Pancreas (tissue), 10 donors: ENCODE measurements at regions of chr20 and their contacts with region 1.

Region 1: GRCh38 chr20:17904027-17904426 is 64.6 kb downstream of the SNX5 start:
- DNase-seq: no peak
- ATAC-seq: no peak
- H3K4me3 ChIP-seq: no peak overlapping the region
- H3K27ac ChIP-seq: no peak overlapping the region
- H3K4me1 ChIP-seq: no peaks in the 10 kb centered on the region
- H3K27me3 ChIP-seq: no peaks in the 10 kb centered on the region
- CTCF ChIP-seq: no peak

Region 2: GRCh38 chr20:17654649-17655285 is 249.3 kb before region 1 on chr20:
- intact Hi-C with region 1: loop called in 1 of 3 experiments (anchors 10 kb)
- DNase-seq: peak in 2 of 6 donors; percentile 2 to 44
- ATAC-seq: no peak
- H3K4me3 ChIP-seq: no peak overlapping the region
- H3K27ac ChIP-seq: no peak overlapping the region
- H3K4me1 ChIP-seq: peaks cover 24 to 51% (median 46%) of the 10 kb centered on the region in 3 donors
- H3K27me3 ChIP-seq: no peaks in the 10 kb centered on the region
- CTCF ChIP-seq: peak in 3 of 4 donors; percentile 12 to 49 (median 27)

Region 3: DNA sequence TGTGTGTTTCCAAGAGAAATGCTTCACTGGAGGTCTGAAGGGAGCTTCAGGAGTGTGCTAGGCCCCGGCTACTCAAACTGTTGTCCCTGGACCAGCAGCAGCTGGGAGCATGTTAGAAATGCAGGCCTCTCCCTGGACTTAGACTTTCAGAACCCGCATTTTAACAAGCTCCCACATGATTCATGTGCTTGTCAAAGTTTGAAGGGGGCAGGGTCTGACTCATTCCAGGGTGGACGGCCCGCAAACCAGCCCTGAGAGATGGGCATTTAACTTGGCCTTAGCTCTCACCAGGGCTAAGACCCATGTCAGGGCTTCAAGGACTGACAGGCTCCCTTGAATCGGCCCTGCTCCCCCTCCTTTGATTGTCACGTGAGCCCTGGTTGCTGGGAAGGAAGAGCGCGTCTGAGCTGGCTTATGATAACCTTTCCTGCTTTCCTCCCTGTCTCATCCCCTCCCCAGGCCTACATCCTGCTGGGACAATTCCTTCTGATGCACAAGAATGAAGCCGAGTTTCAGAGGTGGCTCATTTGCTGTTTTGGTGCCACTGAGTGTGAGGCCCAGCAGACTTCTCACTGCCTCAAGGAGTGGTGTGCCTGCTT is 168.7 kb before region 1 on chr20:
- intact Hi-C with region 1: no loop called
- DNase-seq: peak in 1 of 6 donors; percentile 43
- ATAC-seq: peak; percentile 8 to 20 (median 12)
- H3K4me3 ChIP-seq: no peak overlapping the region
- H3K27ac ChIP-seq: peak overlapping the region in 3 of 4 donors; percentile 14 to 80 (median 66)
- H3K4me1 ChIP-seq: peaks cover 17 to 34% (median 23%) of the 10 kb centered on the region in 3 donors
- H3K27me3 ChIP-seq: no peaks in the 10 kb centered on the region
- CTCF ChIP-seq: no peak

Region 4: GRCh38 chr20:18252597-18253451 is 348.8 kb after region 1 on chr20:
- intact Hi-C with region 1: no loop called
- DNase-seq: no peak
- ATAC-seq: peak in 2 of 4 donors; percentile 34 to 44
- H3K4me3 ChIP-seq: no peak overlapping the region
- H3K27ac ChIP-seq: no peak overlapping the region
- H3K4me1 ChIP-seq: no peaks in the 10 kb centered on the region
- H3K27me3 ChIP-seq: no peaks in the 10 kb centered on the region
- CTCF ChIP-seq: no peak

Region 5: DNA sequence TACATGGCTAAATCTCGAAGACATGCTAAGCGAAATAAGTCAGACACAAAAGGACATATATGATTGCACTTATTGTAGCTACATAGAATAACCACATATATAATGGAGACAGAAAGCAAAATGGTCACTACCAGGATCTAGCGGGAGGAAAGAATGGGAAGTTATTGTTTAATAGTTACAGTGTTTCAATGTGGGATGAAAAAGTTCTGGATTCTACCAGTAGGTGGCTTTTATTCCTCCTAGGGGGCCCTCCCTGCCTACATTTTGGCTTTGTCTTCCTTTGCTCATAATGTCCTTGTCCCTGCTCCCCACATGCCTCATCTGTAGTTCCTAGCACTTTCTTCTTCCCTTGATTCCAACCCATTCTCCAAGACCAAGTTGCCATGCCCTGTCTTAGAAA is 400.6 kb after region 1 on chr20:
- intact Hi-C with region 1: no loop called
- DNase-seq: no peak
- ATAC-seq: no peak
- H3K4me3 ChIP-seq: no peak overlapping the region
- H3K27ac ChIP-seq: no peak overlapping the region
- H3K4me1 ChIP-seq: no peaks in the 10 kb centered on the region
- H3K27me3 ChIP-seq: no peaks in the 10 kb centered on the region
- CTCF ChIP-seq: no peak

Region 6: DNA sequence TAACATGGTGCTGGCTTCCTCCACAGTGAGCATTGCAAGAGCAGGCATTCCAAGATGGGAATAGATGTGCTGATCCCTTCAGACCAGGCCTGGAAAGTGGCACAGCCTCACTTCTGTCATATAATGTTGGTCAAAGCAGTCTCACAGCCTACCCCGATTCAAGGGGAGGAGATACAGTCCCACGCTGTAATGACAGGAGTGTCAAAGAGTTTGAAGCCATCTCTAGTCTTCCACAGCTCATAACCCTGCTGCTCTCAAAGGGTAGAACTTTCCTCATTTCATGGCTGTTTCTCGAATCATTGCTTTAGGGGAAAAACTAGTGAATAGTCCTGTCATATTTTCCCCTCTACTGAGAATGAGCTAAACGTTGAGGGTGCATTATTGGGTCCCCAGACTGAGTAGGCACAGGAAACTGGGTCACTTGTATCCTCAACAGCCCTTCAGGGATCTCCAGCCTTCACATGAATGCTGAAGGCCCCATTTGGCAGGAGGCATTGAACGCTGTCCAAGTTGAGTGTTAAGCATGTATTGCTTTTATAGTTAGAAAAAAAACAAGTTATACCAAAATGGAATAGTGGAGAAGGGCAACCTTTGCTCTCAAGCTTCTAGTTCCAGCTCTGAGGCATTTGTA is 711.1 kb after region 1 on chr20:
- intact Hi-C with region 1: no loop called
- DNase-seq: no peak
- ATAC-seq: no peak
- H3K4me3 ChIP-seq: no peak overlapping the region
- H3K27ac ChIP-seq: no peak overlapping the region
- H3K4me1 ChIP-seq: no peaks in the 10 kb centered on the region
- H3K27me3 ChIP-seq: no peaks in the 10 kb centered on the region
- CTCF ChIP-seq: no peak